ENCODE measurements at regions of chr7 and their contacts with region 1.

Region 1: GRCh38 chr7:71237945-71238344 is 106.0 kb downstream of the GALNT17 start:
- DNase-seq: no peak

Region 2: GRCh38 chr7:70935854-70936253 is 302.1 kb before region 1 on chr7:
- intact Hi-C with region 1: no loop called
- DNase-seq: no peak

Region 3: GRCh38 chr7:71272509-71273490 is 34.9 kb after region 1 on chr7:
- intact Hi-C with region 1: loop called (anchors 5 kb)
- DNase-seq: no peak

Region 4: DNA sequence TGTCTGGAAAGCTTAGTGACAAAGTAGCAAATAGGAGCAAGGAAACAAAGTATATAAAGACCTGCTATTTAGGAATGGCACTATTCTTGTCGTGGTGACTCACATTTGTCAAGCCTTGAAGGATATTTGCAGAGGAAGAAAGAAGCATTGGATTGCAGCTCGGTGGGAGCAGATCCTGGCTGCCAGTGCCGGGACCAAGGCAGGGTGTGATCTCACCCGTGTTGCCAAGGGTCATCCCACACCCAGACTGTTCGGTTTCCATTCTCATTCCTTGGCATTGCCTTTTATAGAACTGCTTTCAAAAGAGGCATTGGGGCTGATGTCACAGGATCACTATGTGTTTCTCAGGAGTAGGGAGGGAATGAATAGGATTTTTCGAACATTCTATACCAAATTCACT is 70.2 kb after region 1 on chr7:
- intact Hi-C with region 1: loop called (anchors 5 kb)
- DNase-seq: no peak

Region 5: DNA sequence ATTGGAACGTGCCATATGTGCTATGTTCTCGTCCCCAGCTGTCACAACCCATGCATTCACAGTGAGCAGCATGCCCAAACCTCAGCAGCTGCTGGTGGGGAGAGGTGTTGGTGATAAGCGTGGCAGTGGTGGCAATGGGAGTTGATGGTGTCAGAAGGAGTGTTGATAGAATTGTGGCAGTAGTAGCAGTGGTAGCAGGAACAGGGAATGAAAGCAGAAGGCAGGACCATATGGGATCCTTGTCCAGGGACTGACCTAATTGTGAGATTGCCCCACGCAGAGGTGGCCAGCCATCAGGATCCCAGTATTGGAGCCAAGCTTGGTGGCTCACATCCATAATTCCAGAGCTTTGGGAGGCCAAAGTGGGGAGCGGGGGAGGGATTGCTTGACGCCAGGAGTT is 170.3 kb after region 1 on chr7:
- intact Hi-C with region 1: loop called (anchors 10 kb)
- DNase-seq: peak; percentile 83

Region 6: DNA sequence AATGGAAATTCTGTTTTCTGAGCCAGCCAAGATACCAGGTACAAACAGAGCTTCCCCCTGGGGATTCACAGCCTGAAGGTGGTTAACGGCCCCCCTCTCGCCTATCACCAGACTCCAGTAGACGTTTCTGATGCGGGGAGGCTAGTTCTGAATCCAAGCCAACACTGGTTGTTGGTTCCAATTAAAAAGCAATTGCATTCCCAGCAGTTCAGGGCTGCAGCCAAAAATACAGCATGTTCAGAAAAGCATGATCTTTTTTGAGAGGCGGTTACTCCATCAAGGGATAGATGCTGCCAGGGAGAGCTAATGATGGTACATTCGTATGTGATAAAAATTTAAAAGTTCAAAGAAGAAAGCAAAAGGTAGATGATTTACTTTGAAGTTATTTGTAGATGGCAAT is 375.0 kb after region 1 on chr7:
- intact Hi-C with region 1: loop called (anchors 10 kb)
- DNase-seq: no peak